Right ventricle myocardium inferior (tissue), 1 donor: ENCODE measurements at regions of chr16 and their contacts with region 1.

Region 1: GRCh38 chr16:7400117-7400890 is 67.7 kb downstream of the RBFOX1 start:
- DNase-seq: no peak
- ATAC-seq: no peak

Region 2: GRCh38 chr16:7597677-7598076 is 197.4 kb after region 1 on chr16:
- intact Hi-C with region 1: no loop called
- DNase-seq: no peak
- ATAC-seq: no peak

Region 3: DNA sequence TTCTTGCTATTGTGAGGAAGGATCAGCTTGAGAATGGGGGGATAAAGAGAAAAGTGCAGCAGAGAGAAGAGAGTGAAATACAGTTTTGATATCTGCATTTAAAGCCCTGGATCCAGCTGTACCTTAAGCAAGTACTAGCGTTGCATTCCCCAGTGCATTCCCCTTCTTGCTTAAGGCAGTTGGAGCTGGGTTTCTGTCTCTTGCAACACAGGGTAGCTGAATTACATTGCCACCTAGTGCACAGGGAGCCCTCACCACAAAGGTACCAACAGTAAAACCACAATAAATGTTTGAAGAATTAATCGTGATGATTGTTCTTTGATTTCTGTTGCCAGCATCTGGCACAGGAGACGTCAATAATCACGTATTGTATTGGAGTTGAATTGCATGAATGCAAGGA is 521.0 kb after region 1 on chr16:
- intact Hi-C with region 1: loop called (anchors 5 kb)
- DNase-seq: no peak
- ATAC-seq: no peak